ENCODE measurements at regions of chr20 and their contacts with region 1.

Region 1: GRCh38 chr20:51456511-51457509 is 85.7 kb downstream of the NFATC2 start:
- DNase-seq: peak; percentile 95
- ATAC-seq: peak; percentile 97 to 99 (median 98)
- H3K4me3 ChIP-seq: peak overlapping the region in 1 of 10 donors; percentile 18
- H3K27ac ChIP-seq: peak overlapping the region in 9 of 10 donors; percentile 31 to 76 (median 53)
- H3K4me1 ChIP-seq: peaks cover 2 to 23% (median 14%) of the 10 kb centered on the region in 9 donors
- H3K27me3 ChIP-seq: no peaks in the 10 kb centered on the region
- CTCF ChIP-seq: no peak

Region 2: DNA sequence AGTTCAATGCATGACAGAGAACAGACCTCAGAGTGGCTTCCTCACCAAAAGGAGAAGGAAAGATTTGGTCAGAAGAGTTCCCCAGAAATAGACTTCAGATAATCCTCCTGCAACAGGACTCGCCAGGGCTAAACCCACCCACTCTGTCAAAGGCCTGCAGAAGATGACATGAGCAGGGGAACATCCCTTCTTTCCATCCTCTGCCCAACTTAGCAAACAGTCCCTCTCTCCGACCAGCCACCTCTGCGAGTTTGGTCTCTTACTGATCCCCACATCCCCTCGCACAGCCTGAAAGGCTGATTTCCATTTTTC is 78.2 kb after region 1 on chr20:
- intact Hi-C with region 1: loop called in 2 of 10 experiments (anchors 5 kb)
- DNase-seq: no peak
- ATAC-seq: no peak
- H3K4me3 ChIP-seq: no peak overlapping the region
- H3K27ac ChIP-seq: peak overlapping the region in 7 of 10 donors; percentile 6 to 68 (median 26)
- H3K4me1 ChIP-seq: peaks cover 2 to 73% (median 33%) of the 10 kb centered on the region in 9 donors
- H3K27me3 ChIP-seq: peaks cover 0 to 6% (median 0%) of the 10 kb centered on the region in 7 donors
- CTCF ChIP-seq: no peak

Region 3: DNA sequence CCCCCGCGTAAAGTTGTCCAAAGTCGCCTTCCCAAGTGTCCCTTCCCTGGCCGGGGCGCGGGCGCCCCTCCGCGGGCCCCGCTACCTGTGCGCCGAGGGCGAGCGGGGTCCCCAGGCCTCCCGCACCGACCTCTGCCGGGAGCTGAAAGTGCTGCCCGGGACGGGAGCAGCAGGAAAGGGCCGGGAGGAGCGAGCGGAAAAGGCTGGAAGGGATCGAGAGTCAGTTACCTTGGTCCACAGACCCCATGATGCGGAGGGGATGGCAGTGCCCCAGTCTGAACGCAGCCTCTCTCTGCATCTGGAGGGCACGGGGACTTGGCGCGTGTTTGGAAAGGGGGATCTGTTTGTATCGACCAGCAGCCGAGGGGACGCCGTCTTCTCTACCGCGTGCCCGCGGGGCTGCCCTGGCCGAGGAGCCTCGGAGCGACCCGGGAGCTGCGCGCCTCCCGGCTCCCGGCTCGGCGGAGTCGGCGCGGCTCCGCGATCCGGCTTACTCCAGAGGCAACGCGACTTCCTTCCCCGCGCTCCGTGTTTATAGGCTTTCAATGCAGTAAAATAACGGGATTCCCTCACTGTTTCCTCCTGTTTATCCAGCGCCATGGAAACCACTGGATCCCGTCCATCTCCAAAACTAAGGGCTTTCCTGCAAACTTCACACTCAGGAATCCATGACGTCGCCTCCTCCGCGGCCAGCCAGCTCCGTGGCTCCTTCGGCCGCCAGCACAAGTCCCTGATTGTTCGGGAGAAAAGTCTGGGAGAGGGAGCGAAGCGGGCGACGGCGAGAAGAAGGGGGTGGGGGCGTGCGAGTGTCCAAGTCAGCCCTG is 105.7 kb after region 1 on chr20:
- intact Hi-C with region 1: loop called in 1 of 10 experiments (anchors 10 kb)
- DNase-seq: peak; percentile 79 to 94
- ATAC-seq: peak; percentile 75 to 91 (median 84)
- H3K4me3 ChIP-seq: peak overlapping the region; percentile 19 to 72 (median 59)
- H3K27ac ChIP-seq: peak overlapping the region; percentile 66 to 96 (median 86)
- H3K4me1 ChIP-seq: peaks cover 8 to 63% (median 45%) of the 10 kb centered on the region in 9 donors
- H3K27me3 ChIP-seq: peaks cover 0 to 69% (median 0%) of the 10 kb centered on the region in 7 donors
- CTCF ChIP-seq: peak in 7 of 9 donors; percentile 15 to 64 (median 39)

Measured in heart right ventricle (tissue), 16 donors.